Calu3 (cell line): ENCODE measurements at regions of chr3 and their contacts with region 1.

Region 1: DNA sequence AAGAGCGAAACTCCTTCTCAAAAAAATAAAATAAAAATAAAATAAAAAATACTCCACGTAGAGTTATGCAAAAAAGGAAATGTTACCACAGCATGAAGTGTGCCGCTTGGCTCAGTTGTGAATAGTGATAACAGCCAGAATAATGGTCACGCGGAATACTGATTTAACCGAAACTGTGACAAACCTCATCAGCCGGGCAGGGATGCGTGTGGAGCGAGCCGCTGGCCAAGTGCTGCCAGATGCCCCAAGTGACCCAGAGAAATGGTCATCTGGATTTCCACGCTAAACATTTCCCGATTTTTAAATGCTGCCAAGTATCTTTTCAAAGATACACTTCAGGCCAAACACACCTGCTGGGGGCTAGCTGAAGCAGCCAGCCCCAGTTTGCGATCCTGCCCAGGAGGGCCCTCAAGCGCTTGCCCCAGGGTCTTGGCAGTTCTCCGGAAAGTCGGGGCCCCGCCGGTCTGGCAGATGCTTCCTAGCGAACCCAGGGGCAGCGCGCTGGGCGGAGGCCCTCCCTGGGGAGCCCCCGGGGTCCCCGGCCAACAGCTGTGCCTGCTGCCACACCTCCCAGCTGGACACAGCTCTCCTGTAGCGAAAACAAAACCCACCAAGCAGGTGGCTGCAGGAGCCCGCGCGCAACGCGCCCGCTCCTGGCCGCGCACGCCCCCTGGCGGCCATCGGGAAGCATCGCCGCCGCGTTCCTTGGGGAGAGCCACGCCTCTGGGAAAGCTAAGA is 35.1 kb downstream of the CMTM6 start:
- DNase-seq: peak; percentile 83
- H3K4me3 Mint-ChIP-seq: no peak overlapping the region
- H3K27ac Mint-ChIP-seq: no peak overlapping the region
- H3K4me1 Mint-ChIP-seq: peaks cover 33% of the 10 kb centered on the region
- H3K27me3 Mint-ChIP-seq: no peaks in the 10 kb centered on the region
- CTCF ChIP-seq: peak; percentile 97

Region 2: GRCh38 chr3:31724661-31725060 is 742.8 kb before region 1 on chr3:
- CTCF ChIA-PET with region 1: no interaction called
- intact Hi-C with region 1: no loop called
- DNase-seq: no peak
- H3K4me3 Mint-ChIP-seq: no peak overlapping the region
- H3K27ac Mint-ChIP-seq: no peak overlapping the region
- H3K4me1 Mint-ChIP-seq: no peaks in the 10 kb centered on the region
- H3K27me3 Mint-ChIP-seq: no peaks in the 10 kb centered on the region
- CTCF ChIP-seq: no peak

Region 3: DNA sequence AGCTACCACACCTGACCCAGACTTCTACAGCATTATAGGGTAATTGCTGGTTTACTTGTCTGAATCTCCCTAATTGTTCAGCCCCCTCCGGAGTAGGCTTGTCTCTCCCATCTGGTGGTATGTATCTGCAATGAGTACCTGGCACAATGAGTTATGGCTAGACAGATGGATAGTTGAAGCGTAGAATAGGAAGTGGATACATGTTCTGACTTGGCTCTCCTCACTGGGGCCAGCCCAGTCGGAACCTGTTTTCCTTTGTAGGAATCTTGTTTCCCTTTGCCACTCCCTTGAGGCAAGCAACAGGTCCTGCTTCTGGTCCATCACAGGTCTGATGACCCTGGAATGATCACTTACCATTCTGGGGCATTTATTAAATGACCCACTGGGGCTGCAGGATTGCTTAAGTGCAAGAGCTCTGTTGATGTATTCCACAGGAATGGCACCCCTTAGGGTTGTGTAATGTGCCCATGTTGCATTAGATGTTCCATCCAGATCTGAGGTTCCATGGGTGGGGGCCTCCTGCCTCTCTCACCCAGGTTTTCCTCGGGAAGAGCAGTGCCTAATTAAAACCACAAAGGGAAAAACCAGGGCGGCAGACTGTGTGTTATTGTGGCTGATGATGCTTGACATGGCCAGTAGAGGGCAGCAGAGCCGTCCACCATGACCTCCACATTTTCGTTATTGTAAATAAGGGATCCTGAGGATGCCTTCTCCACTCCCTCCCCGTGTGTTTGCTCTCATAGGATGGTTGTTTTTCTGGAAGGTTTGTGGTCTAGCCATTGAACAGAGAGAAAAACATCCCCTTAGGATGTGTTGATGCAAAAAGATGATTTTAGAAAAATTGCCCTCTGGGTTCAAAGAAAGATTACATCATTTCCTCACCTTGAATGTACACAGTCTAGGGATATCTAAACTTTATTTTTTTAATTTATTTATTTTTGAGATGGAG is 171.0 kb before region 1 on chr3:
- CTCF ChIA-PET with region 1: no interaction called
- intact Hi-C with region 1: loop called (anchors 2 kb)
- DNase-seq: peak; percentile 52
- H3K4me3 Mint-ChIP-seq: no peak overlapping the region
- H3K27ac Mint-ChIP-seq: no peak overlapping the region
- H3K4me1 Mint-ChIP-seq: peaks cover 11% of the 10 kb centered on the region
- H3K27me3 Mint-ChIP-seq: no peaks in the 10 kb centered on the region
- CTCF ChIP-seq: peak; percentile 71

Region 4: DNA sequence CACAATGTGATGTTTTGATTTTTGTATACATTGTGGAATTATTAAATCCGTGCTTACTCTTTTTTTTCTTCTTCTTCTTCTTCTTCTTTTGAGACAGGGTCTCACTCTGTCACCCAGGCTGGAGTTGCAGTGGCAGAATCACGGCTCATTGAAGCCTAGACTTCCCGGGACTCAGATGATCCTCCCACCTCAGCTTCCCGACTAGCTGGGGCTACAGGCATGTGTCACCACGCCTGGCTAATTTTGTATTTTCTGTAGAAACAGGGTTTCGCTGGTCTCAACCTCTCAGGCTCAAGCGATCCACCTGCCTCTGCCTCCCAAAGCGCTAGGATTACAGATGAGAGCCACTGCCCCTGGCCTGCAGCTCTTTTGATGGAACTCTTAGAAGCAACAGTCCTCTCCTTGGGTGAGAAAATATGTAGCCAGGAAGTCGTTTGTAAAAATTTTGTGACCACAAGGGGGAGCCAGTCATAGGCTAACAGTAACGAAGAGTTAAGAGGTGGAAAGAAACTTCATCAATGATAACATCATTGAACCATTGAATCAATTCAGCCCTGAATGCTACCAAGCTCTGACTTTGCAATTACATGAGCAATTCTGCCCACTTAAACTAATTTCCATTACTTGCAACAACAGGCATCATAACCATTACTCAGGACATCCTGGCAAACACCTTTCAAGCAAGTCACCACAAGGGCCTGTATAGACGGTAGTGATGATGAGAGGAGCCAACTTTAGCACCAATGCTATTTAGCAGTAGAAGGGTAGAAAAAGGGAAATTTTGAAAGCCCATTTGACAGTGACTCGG is 92.5 kb before region 1 on chr3:
- CTCF ChIA-PET with region 1: interaction called, 7 read pairs
- intact Hi-C with region 1: loop called (anchors 10 kb)
- DNase-seq: peak; percentile 75
- H3K4me3 Mint-ChIP-seq: no peak overlapping the region
- H3K27ac Mint-ChIP-seq: peak overlapping the region; percentile 53
- H3K4me1 Mint-ChIP-seq: peaks cover 8% of the 10 kb centered on the region
- H3K27me3 Mint-ChIP-seq: no peaks in the 10 kb centered on the region
- CTCF ChIP-seq: peak; percentile 64

Region 5: GRCh38 chr3:32406486-32407408 is 60.8 kb before region 1 on chr3:
- CTCF ChIA-PET with region 1: interaction called, 8 read pairs
- intact Hi-C with region 1: loop called (anchors 5 kb)
- DNase-seq: no peak
- H3K4me3 Mint-ChIP-seq: peak overlapping the region; percentile 23
- H3K27ac Mint-ChIP-seq: peak overlapping the region; percentile 66
- H3K4me1 Mint-ChIP-seq: peaks cover 86% of the 10 kb centered on the region
- H3K27me3 Mint-ChIP-seq: no peaks in the 10 kb centered on the region
- CTCF ChIP-seq: no peak

Region 6: GRCh38 chr3:32421991-32422859 is 45.3 kb before region 1 on chr3:
- CTCF ChIA-PET with region 1: interaction called, 7 read pairs
- intact Hi-C with region 1: loop called (anchors 1 kb)
- DNase-seq: peak; percentile 96
- H3K4me3 Mint-ChIP-seq: peak overlapping the region; percentile 66
- H3K27ac Mint-ChIP-seq: peak overlapping the region; percentile 98
- H3K4me1 Mint-ChIP-seq: peaks cover 62% of the 10 kb centered on the region
- H3K27me3 Mint-ChIP-seq: no peaks in the 10 kb centered on the region
- CTCF ChIP-seq: no peak

Region 7: GRCh38 chr3:32557643-32558352 is 90.3 kb after region 1 on chr3:
- CTCF ChIA-PET with region 1: no interaction called
- intact Hi-C with region 1: no loop called
- DNase-seq: no peak
- H3K4me3 Mint-ChIP-seq: no peak overlapping the region
- H3K27ac Mint-ChIP-seq: no peak overlapping the region
- H3K4me1 Mint-ChIP-seq: no peaks in the 10 kb centered on the region
- H3K27me3 Mint-ChIP-seq: no peaks in the 10 kb centered on the region
- CTCF ChIP-seq: no peak